ENCODE measurements at regions of chr7 and their contacts with region 1.

Region 1: GRCh38 chr7:16078076-16078952 is 343.0 kb downstream of the CRPPA start:
- DNase-seq: peak; percentile 56
- H3K4me3 ChIP-seq: no peak overlapping the region
- H3K27ac ChIP-seq: no peak overlapping the region
- H3K4me1 ChIP-seq: peaks cover 7% of the 10 kb centered on the region
- H3K27me3 ChIP-seq: no peaks in the 10 kb centered on the region
- CTCF ChIP-seq: peak; percentile 63 to 76

Region 2: DNA sequence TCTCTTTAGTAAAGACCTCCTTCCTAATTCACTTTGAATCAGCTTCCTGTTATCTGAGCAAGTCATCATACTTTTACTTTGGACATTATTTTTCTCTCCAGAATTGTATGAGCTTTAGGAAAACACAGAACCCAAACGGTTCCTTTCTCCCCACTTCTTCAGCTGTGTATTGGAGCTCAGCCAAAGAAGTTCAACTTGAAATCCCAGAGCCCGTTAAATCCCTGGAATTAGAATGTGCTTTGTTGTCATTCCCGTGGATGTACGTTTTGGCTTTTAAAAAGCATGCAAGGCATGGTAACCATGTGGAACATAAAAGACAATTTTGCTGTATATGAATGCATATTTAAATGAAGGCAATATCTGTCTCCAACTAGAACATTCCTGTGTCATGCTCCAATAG is 563.1 kb before region 1 on chr7:
- CTCF ChIA-PET with region 1: no interaction called
- dilution Hi-C with region 1: no loop called
- in situ Hi-C with region 1: no loop called
- intact Hi-C with region 1: no loop called
- DNase-seq: no peak
- H3K4me3 ChIP-seq: no peak overlapping the region
- H3K27ac ChIP-seq: no peak overlapping the region
- H3K4me1 ChIP-seq: no peaks in the 10 kb centered on the region
- H3K27me3 ChIP-seq: no peaks in the 10 kb centered on the region
- CTCF ChIP-seq: no peak

Region 3: DNA sequence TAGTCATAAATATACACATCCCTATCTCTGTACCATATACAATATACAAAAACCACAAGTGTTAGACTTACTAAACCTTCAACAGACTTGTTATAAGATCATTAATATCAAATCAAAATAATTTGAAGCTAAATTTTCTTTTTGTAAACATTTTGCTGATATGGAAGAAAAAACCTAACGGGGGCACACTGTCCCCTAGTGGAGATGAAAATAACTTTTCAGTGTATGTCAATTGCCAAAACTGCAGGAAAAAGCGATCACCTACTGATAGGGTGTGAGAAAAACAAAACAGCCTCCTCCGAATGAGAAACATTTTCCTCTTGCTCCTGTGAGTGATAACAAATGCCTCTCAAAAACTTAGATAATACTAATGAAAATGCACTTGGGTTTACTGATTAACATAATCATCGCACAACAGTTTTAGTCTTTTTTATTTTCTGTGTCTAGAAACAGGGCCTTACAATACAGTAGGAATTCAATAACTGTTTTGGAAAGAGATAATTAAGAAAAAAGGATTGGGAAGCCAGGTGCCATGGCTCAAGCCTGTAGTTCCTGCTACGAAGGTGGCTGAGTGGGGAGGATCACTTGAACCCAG is 20.4 kb after region 1 on chr7:
- CTCF ChIA-PET with region 1: interaction called, 4 read pairs
- dilution Hi-C with region 1: no loop called
- in situ Hi-C with region 1: no loop called
- intact Hi-C with region 1: loop called (anchors 1 kb)
- DNase-seq: no peak
- H3K4me3 ChIP-seq: no peak overlapping the region
- H3K27ac ChIP-seq: no peak overlapping the region
- H3K4me1 ChIP-seq: no peaks in the 10 kb centered on the region
- H3K27me3 ChIP-seq: no peaks in the 10 kb centered on the region
- CTCF ChIP-seq: peak; percentile 87 to 90

Region 4: GRCh38 chr7:16564909-16565426 is 486.7 kb after region 1 on chr7:
- CTCF ChIA-PET with region 1: no interaction called
- dilution Hi-C with region 1: no loop called
- in situ Hi-C with region 1: no loop called
- intact Hi-C with region 1: loop called (anchors 1 kb)
- DNase-seq: peak; percentile 39
- H3K4me3 ChIP-seq: no peak overlapping the region
- H3K27ac ChIP-seq: no peak overlapping the region
- H3K4me1 ChIP-seq: no peaks in the 10 kb centered on the region
- H3K27me3 ChIP-seq: no peaks in the 10 kb centered on the region
- CTCF ChIP-seq: peak; percentile 69 to 70